ENCODE measurements at regions of chr22 and their contacts with region 1.

Region 1: GRCh38 chr22:38766076-38766777 is 10.4 kb upstream of the SUN2 start:
- DNase-seq: peak; percentile 45 to 59 (median 51)
- ATAC-seq: peak; percentile 82
- H3K4me3 ChIP-seq: no peak overlapping the region
- H3K27ac ChIP-seq: no peak overlapping the region
- H3K4me1 ChIP-seq: peaks cover 0 to 17% of the 10 kb centered on the region in 2 experiments; a peak in 3 of 5 replicates
- H3K27me3 ChIP-seq: no peaks in the 10 kb centered on the region
- CTCF ChIP-seq: peak; percentile 60 to 77 (median 63)
- EP300 ChIP-seq: no peak
- POLR2A ChIP-seq: no peak
- RAD21 ChIP-seq: peak in 1 of 2 experiments; percentile 41; a peak in 2 of 4 replicates

Region 2: DNA sequence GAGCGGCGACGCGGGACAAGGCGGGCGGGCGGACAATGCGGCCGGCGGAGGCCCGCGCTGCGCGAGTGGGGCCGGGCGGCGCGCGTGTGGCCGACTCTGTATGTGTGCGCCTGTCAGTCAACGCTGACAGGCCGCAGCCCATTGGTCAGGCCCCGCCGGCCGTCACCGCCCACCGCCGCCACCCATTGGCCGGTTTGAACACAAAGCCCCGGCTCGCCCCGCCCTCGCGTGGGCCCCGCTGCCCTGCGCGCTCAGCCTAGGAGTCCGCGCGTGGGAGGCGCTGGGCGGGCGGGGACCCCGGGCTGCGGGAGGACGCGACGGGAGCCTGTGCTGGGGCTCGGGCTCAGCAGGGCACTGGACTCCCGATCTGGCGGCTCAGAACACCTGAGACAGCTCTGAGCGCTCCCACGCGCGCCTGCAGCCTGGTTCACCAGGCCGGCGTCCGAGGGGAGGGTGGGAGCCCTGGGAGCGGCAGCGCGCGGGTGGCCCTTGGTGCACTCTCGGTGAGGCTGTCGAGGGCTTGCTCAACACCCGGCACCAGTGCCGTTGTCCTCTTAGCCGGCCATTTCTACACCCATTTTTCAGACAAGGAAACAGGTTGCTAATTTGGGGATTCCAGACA is 10.2 kb before region 1 on chr22 and contains the start of gene SUN2:
- CTCF ChIA-PET with region 1: no interaction called
- POLR2A ChIA-PET with region 1: interaction called, 25 read pairs
- in situ Hi-C with region 1: no loop called
- intact Hi-C with region 1: no loop called
- DNase-seq: peak; percentile 91 to 98 (median 98)
- ATAC-seq: peak; percentile 93
- H3K4me3 ChIP-seq: peak within 1 kb of the TSS; percentile 62
- H3K27ac ChIP-seq: peak within 1 kb of the TSS; percentile 86
- H3K4me1 ChIP-seq: peaks cover 4 to 45% of the 10 kb centered on the region in 2 experiments; a peak in 4 of 5 replicates
- H3K27me3 ChIP-seq: no peaks in the 10 kb centered on the region
- CTCF ChIP-seq: no peak
- EP300 ChIP-seq: no peak
- POLR2A ChIP-seq: peak; percentile 64
- RAD21 ChIP-seq: no peak
- polyA plus RNA-seq, gene SUN2: 0.11 to 0.21 TPM

Region 3: GRCh38 chr22:38843201-38843715 is 77.0 kb after region 1 on chr22:
- CTCF ChIA-PET with region 1: interaction called, 3 read pairs
- POLR2A ChIA-PET with region 1: interaction called, 4 read pairs
- in situ Hi-C with region 1: no loop called
- intact Hi-C with region 1: loop called (anchors 5 kb)
- DNase-seq: peak; percentile 52 to 70 (median 58)
- ATAC-seq: peak; percentile 78
- H3K4me3 ChIP-seq: peak overlapping the region; percentile 53
- H3K27ac ChIP-seq: peak overlapping the region; percentile 39; the same call in 1 of the 3 replicates
- H3K4me1 ChIP-seq: peaks cover 13 to 44% of the 10 kb centered on the region in 2 experiments; a peak in 4 of 5 replicates
- H3K27me3 ChIP-seq: no peaks in the 10 kb centered on the region
- CTCF ChIP-seq: peak in 2 of 3 experiments; percentile 45 to 71; a peak in 4 of 6 replicates
- EP300 ChIP-seq: no peak
- POLR2A ChIP-seq: no peak
- RAD21 ChIP-seq: peak in 1 of 2 experiments; percentile 35; a peak in 1 of 4 replicates

Region 4: DNA sequence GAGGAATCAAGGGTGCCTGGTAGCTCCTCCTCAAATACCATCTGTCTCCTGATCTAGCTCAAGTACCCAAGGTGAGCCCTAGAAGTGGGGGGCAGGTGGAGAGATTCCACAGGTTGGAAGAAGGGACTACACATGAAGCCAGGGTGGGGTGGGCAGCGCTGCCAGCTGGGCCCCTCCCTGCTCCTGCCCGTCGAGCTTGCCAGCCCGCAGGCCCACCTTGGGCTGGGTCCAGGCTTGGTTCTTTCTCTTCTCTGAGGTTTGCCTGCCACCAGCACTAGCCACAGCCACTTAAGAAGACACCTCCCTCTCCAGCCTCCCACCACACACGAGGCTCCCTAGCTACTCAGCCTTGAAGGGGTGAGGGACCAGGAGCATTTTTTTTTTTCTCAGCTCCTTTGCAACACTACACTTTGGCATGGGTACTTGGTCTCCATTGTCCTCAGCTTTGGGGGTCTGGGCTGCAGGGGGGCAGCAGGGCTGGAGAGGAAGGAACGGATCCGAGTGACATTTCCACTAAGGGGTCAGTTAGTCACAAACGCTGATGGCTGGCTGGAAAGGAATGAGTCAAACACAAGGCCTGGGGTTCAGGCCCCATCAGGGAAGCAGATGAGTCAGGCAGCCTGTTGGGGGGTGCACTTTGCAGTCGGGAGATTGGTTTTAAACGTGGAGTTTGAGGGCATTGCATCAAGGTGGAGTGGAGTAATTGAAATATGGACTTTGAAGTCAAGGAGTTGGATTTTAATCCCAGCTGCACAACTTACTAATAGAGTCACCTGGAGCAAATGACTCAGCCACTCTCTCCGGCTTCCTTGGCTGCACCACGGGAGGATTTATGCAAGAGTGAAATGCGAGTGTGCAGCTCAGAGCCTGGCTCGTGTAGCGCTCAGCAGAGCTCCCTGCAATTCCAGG is 85.0 kb after region 1 on chr22:
- CTCF ChIA-PET with region 1: interaction called, 3 read pairs
- POLR2A ChIA-PET with region 1: no interaction called
- in situ Hi-C with region 1: loop called (anchors 5 kb)
- intact Hi-C with region 1: no loop called
- DNase-seq: peak in 2 of 4 experiments; percentile 33 to 41
- ATAC-seq: no peak
- H3K4me3 ChIP-seq: no peak overlapping the region
- H3K27ac ChIP-seq: no peak overlapping the region
- H3K4me1 ChIP-seq: peaks cover 13 to 27% of the 10 kb centered on the region in 2 experiments; a peak in 4 of 5 replicates
- H3K27me3 ChIP-seq: no peaks in the 10 kb centered on the region
- CTCF ChIP-seq: no peak
- EP300 ChIP-seq: no peak
- POLR2A ChIP-seq: no peak
- RAD21 ChIP-seq: no peak

Region 5: GRCh38 chr22:38872172-38872830 is 106.1 kb after region 1 on chr22 and contains the start of gene CBX6:
- CTCF ChIA-PET with region 1: no interaction called
- POLR2A ChIA-PET with region 1: interaction called, 3 read pairs
- in situ Hi-C with region 1: no loop called
- intact Hi-C with region 1: loop called (anchors 5 kb)
- DNase-seq: peak; percentile 92 to 95 (median 93)
- ATAC-seq: peak; percentile 70
- H3K4me3 ChIP-seq: peak within 1 kb of the TSS; percentile 62
- H3K27ac ChIP-seq: peak within 1 kb of the TSS; percentile 68
- H3K4me1 ChIP-seq: peaks cover 13 to 27% of the 10 kb centered on the region in 2 experiments
- H3K27me3 ChIP-seq: peaks cover 0 to 5% of the 10 kb centered on the region in 2 experiments; a peak in 2 of 5 replicates
- CTCF ChIP-seq: no peak
- EP300 ChIP-seq: no peak
- POLR2A ChIP-seq: no peak; the same call in 1 of the 2 replicates
- RAD21 ChIP-seq: no peak
- polyA plus RNA-seq, gene CBX6: 0.75 to 1.2 TPM

Region 6: DNA sequence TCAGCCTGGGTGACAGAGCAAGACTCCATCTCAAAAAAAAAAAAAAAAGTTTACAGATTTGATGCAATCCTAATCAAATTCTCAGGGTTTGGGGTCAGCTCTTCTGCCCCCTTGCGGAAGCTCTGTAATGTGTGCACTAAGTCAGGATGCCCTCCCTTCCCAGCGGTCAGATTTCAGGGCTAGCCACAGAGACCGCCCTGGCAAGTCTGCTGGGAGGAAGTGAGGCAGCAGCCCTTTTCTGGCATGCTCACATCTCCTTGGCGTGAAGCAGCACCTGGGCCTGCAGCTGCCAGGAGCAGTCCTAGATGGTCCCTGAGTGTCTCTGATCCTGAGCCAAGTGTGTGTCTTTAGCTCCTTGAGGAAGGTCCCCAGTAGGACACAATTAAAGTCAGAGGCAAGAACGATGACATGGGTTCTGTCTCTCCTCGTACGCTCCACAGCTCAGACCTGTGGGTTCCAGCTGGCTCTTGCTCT is 237.0 kb after region 1 on chr22:
- CTCF ChIA-PET with region 1: no interaction called
- POLR2A ChIA-PET with region 1: no interaction called
- in situ Hi-C with region 1: loop called (anchors 10 kb)
- intact Hi-C with region 1: loop called (anchors 10 kb)
- DNase-seq: peak; percentile 61 to 72 (median 64)
- ATAC-seq: peak; percentile 95
- H3K4me3 ChIP-seq: no peak overlapping the region
- H3K27ac ChIP-seq: no peak overlapping the region
- H3K4me1 ChIP-seq: no peaks in the 10 kb centered on the region; a peak in 1 of 5 replicates
- H3K27me3 ChIP-seq: peaks cover 0 to 9% of the 10 kb centered on the region in 2 experiments; a peak in 1 of 5 replicates
- CTCF ChIP-seq: peak; percentile 67 to 74 (median 70)
- EP300 ChIP-seq: no peak
- POLR2A ChIP-seq: no peak
- RAD21 ChIP-seq: peak; percentile 36 to 71

Region 7: DNA sequence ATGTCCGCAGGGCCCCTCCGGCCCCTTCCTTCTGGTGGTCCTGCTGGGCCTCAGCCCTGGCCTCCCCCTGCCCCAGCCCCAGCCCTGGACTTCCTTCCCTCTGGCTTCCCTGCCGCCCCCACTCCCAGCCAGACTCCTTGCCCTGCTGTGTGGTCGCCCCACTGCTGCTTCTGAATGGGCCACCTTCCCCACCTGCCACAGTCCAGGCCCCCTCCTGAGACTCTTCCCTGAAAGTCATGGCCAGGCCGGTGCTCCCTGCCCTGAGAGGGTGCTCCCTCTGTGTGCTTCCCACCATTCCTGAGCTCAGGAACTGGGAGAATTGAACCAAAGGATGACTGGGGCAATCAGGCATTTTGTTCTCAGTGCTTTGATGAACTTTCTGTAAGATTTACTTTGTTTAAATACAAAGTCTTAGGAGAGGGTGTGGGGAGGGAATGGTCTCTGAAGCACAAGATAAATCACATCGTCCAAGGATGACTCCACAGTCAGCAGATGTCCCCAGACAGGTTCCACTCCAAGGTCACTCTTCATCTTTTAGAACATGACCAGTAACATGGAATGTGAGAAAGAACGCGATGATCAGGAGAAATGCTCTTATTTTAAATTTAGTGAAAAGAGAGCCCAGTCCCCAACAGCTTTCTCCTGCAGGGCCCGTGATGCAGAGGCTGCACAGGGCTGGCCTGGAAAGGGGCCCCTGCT is 255.5 kb after region 1 on chr22:
- CTCF ChIA-PET with region 1: no interaction called
- POLR2A ChIA-PET with region 1: no interaction called
- in situ Hi-C with region 1: no loop called
- intact Hi-C with region 1: no loop called
- DNase-seq: peak in 1 of 4 experiments; percentile 23
- ATAC-seq: no peak
- H3K4me3 ChIP-seq: peak overlapping the region; percentile 60
- H3K27ac ChIP-seq: peak overlapping the region; percentile 79
- H3K4me1 ChIP-seq: peaks cover 13 to 46% of the 10 kb centered on the region in 2 experiments; a peak in 4 of 5 replicates
- H3K27me3 ChIP-seq: no peaks in the 10 kb centered on the region
- CTCF ChIP-seq: no peak
- EP300 ChIP-seq: no peak
- POLR2A ChIP-seq: no peak
- RAD21 ChIP-seq: no peak

Region 8: DNA sequence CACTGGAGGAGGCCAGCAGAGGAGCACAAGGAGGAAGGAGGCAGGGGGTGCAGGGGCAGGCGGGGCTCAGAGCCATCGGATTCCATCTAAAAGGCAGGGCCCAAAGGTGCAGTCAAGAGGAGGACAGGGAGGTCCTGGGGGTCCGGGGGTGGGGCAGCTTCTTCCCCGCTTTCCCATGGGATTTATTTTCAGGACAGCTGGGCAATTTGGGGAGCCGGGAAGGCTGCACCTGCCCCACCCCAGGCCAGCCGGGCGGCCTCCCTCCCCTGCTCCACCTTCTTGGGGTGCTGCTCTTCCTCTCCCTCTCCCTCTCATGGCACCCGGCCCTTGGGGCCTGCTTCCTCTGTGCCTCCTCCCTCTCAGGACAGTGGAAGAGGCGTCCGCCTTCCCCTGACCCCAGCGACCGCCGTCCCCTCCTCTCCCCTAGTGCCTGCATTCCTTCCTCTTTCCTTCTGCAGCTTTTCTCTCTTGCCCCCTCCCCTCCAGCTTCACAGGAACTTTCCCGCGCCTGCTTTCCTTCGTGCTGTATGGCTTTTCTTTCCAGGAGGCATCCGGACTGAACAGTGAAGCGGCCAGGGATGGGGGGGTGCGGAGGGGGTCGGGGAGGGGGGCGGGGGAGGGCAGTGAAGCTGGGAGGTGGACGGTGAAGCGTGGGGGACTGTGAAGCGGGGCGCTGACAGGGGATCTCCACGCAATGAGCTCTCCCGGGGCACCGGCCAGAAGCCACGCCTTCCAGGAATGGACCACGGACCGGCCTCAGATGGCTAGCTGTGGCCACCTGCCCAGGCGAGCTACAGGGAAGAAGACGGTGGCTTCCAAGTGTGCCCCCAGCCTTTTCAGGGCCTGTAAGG is 357.7 kb after region 1 on chr22:
- CTCF ChIA-PET with region 1: interaction called, 3 read pairs
- POLR2A ChIA-PET with region 1: no interaction called
- in situ Hi-C with region 1: no loop called
- intact Hi-C with region 1: loop called (anchors 5 kb)
- DNase-seq: peak in 1 of 4 experiments; percentile 4
- ATAC-seq: no peak
- H3K4me3 ChIP-seq: no peak overlapping the region
- H3K27ac ChIP-seq: no peak overlapping the region
- H3K4me1 ChIP-seq: peaks cover 0 to 2% of the 10 kb centered on the region in 2 experiments; a peak in 1 of 5 replicates
- H3K27me3 ChIP-seq: no peaks in the 10 kb centered on the region
- CTCF ChIP-seq: no peak
- EP300 ChIP-seq: no peak
- POLR2A ChIP-seq: no peak
- RAD21 ChIP-seq: no peak